ENCODE measurements at regions of chr18 and their contacts with region 1.

Region 1: GRCh38 chr18:62584241-62585120 is 61.7 kb downstream of the ZCCHC2 start:
- DNase-seq: peak; percentile 90
- H3K4me3 ChIP-seq: no peak overlapping the region
- H3K27ac ChIP-seq: no peak overlapping the region
- H3K4me1 ChIP-seq: peaks cover 11% of the 10 kb centered on the region
- H3K27me3 ChIP-seq: no peaks in the 10 kb centered on the region
- CTCF ChIP-seq: peak; percentile 92 to 95
- POLR2A ChIP-seq: no peak

Region 2: DNA sequence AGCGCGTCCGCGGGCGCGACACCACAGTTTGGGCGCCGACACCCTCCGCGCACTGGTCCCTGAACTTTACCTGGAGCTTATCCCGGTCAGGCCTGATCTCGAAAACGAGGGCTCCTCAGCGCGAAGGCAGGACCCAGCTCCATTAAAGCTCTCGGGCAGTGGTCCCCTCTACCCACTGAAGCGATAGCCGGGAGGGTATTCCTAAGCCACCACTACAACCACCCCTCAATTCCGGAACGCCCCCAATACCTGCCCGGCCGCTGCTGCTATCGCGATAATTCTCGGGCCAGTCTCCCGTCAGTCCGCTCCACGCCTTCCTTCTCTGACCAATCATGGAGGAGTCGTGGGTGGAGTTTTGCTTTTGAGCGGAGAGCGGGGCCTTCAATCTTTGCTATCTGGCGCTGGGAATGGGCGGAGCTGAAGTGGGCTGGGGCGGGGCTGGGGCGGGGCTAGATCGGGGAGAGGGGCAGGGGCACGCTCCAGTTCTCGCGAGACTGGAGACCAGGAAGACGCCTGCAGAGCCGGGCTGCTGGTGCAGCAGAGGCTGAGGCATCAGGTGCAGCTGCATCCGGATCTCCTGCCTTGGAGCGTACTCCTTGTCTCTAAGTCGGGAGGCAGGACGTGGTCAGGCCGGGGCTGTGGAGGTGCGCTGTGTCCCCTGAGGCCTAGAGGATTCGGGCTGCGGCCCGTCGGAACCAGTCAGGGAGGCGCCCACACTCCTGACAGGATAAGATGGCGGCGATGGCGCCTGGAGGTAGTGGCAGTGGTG is 397.5 kb before region 1 on chr18 and contains the starts of genes PIGN and RELCH:
- CTCF ChIA-PET with region 1: interaction called, 10 read pairs
- POLR2A ChIA-PET with region 1: interaction called, 3 read pairs
- dilution Hi-C with region 1: no loop called
- intact Hi-C with region 1: loop called (anchors 1 kb)
- DNase-seq: peak; percentile 99
- H3K4me3 ChIP-seq: peak within 1 kb of the TSS; percentile 86 to 97 (median 94)
- H3K27ac ChIP-seq: peak within 1 kb of the TSS; percentile 79
- H3K4me1 ChIP-seq: peaks cover 34% of the 10 kb centered on the region
- H3K27me3 ChIP-seq: no peaks in the 10 kb centered on the region
- CTCF ChIP-seq: no peak
- POLR2A ChIP-seq: peak; percentile 88
- total RNA-seq, gene PIGN: 26.1 and 31.1 TPM in 2 replicates
- total RNA-seq, gene RELCH: 20.7 and 25.2 TPM in 2 replicates

Region 3: DNA sequence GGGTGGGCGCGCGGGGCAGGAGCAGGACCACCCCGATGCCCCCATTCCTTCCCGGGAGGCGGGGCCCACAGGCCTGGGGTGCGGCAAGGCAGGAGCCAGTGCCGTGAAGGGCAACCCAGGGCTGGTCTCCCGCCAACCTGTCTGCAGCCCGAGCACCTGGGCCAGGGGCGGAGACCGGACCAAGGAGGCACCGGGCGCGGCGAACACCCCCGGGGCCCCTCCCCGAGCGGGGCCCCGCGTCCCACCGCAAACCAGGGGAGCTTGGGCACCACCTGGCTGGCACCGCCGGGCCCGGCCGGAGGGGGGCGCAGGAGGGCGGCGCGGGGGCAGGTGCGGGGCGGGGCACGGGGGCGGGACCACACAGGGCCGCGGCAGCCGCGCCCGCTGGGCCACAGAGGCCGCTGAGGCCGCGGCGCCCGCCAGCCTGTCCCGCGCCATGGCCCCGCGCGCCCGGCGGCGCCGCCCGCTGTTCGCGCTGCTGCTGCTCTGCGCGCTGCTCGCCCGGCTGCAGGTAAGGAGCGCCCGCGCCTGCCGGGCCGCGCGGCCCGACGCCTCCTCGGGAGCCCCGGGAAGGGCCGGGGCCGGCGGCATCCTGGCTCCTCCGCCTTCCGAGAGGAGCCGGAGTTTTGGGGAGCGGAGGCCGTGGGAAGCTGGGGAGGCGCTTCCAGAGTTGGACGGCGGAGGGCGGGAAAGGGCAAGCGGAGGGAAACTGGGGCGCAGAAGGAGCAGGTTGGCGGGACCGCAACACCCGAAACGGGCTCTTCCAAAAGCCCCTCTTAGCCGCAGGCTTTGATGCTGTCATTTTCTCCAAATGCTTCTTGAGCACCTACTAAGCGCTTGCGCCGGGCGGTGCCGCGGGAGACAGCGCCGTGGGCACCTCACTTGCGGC is 259.3 kb before region 1 on chr18 and contains the start of gene TNFRSF11A:
- CTCF ChIA-PET with region 1: interaction called, 4 read pairs
- POLR2A ChIA-PET with region 1: no interaction called
- dilution Hi-C with region 1: no loop called
- intact Hi-C with region 1: loop called (anchors 2 kb)
- DNase-seq: peak; percentile 30
- H3K4me3 ChIP-seq: peak within 1 kb of the TSS; percentile 55 to 84 (median 83)
- H3K27ac ChIP-seq: no peak within 1 kb of the TSS
- H3K4me1 ChIP-seq: peaks cover 55% of the 10 kb centered on the region
- H3K27me3 ChIP-seq: no peaks in the 10 kb centered on the region
- CTCF ChIP-seq: peak; percentile 12 to 42
- POLR2A ChIP-seq: no peak
- total RNA-seq, gene TNFRSF11A: 11.1 and 11.9 TPM in 2 replicates

Region 4: GRCh38 chr18:62413206-62413605 is 171.3 kb before region 1 on chr18:
- CTCF ChIA-PET with region 1: no interaction called
- POLR2A ChIA-PET with region 1: no interaction called
- dilution Hi-C with region 1: no loop called
- intact Hi-C with region 1: no loop called
- DNase-seq: no peak
- H3K4me3 ChIP-seq: no peak overlapping the region
- H3K27ac ChIP-seq: no peak overlapping the region
- H3K4me1 ChIP-seq: no peaks in the 10 kb centered on the region
- H3K27me3 ChIP-seq: peaks cover 7% of the 10 kb centered on the region in 2 experiments
- CTCF ChIP-seq: no peak
- POLR2A ChIP-seq: no peak

Region 5: DNA sequence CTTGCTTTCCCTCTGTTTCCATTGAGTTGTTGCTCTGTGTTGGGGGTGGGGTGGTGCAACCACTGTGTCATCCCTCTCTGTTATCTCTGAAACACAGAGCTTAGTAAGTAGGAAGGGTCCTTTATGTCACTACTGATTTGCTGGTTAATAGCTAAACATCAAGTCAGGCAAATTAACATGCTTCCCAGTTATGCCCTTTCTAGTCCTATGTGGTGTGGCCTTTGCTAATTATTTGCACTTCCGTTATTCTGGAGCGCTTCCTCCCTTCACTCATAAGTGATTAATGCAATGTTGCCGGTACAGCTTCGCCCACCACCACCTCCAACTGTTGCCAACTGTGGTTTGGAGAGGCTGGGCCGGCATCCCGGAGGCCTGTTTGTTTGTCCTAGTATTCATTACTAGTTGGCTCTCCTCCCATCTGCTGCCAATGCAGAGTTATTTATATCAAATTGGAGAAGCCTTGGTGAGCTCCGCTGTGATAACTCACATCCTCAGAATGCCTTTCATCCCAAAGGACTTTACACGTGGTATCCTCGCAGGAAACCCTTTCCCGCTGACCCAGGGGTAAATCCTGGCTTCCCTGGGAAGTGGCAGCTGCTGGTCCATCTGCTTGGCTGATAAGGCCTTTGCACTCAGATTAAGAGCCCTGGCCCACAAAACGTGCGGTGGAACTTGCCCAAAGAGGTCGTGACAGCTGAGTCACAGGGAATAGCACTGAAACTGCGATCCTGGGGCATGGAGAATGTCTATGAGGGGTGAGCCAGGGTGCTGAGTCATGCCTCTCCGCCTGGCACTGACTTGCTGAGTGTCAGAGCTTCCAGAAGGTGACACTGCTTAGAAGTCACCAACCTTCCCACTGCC is 133.7 kb before region 1 on chr18:
- CTCF ChIA-PET with region 1: interaction called, 14 read pairs
- POLR2A ChIA-PET with region 1: no interaction called
- dilution Hi-C with region 1: no loop called
- intact Hi-C with region 1: no loop called
- DNase-seq: peak; percentile 99
- H3K4me3 ChIP-seq: peak overlapping the region in 1 of 3 experiments; percentile 26
- H3K27ac ChIP-seq: peak overlapping the region; percentile 87
- H3K4me1 ChIP-seq: peaks cover 33% of the 10 kb centered on the region
- H3K27me3 ChIP-seq: no peaks in the 10 kb centered on the region
- CTCF ChIP-seq: no peak
- POLR2A ChIP-seq: peak; percentile 65

Region 6: GRCh38 chr18:62957885-62958472 is 373.5 kb after region 1 on chr18:
- CTCF ChIA-PET with region 1: interaction called, 36 read pairs
- POLR2A ChIA-PET with region 1: no interaction called
- dilution Hi-C with region 1: no loop called
- intact Hi-C with region 1: loop called (anchors 1 kb)
- DNase-seq: peak; percentile 60
- H3K4me3 ChIP-seq: no peak overlapping the region
- H3K27ac ChIP-seq: no peak overlapping the region
- H3K4me1 ChIP-seq: peaks cover 5% of the 10 kb centered on the region
- H3K27me3 ChIP-seq: no peaks in the 10 kb centered on the region
- CTCF ChIP-seq: peak; percentile 31 to 42
- POLR2A ChIP-seq: no peak